GM12878 (cell line): ENCODE measurements at regions of chr10 and their contacts with region 1.

Region 1: GRCh38 chr10:14971867-14972448 is 12.8 kb downstream of the MEIG1 start:
- DNase-seq: no peak
- ATAC-seq: peak; percentile 85
- H3K4me3 ChIP-seq: no peak overlapping the region
- H3K27ac ChIP-seq: no peak overlapping the region
- H3K4me1 ChIP-seq: no peaks in the 10 kb centered on the region
- H3K27me3 ChIP-seq: no peaks in the 10 kb centered on the region
- CTCF ChIP-seq: peak; percentile 53 to 75 (median 54)
- EP300 ChIP-seq: no peak
- POLR2A ChIP-seq: no peak
- RAD21 ChIP-seq: peak; percentile 73

Region 2: DNA sequence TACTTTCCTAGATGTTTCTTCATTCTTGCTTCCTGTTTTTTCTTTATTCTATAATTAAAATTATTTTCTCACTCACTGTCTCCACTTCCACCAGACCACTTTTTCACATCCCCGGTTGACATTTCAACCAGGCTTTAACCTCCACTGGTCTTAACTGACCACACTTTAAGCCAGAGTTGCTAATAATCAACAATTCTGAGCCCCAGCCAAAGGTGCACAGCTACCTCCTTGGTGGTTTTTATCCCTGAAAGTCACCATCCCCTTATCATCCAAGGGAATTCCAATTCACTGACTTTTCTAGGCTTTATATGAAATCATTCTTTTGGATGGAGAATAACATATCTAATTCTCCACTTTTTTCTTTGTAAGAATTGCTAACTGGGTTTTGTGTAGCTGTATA is 780.1 kb before region 1 on chr10:
- CTCF ChIA-PET with region 1: interaction called, 3 read pairs
- POLR2A ChIA-PET with region 1: no interaction called
- RAD21 ChIA-PET with region 1: no interaction called
- SMC1A ChIA-PET with region 1: interaction called, 4 read pairs
- in situ Hi-C with region 1: no loop called
- intact Hi-C with region 1: loop called (anchors 5 kb)
- DNase-seq: no peak
- ATAC-seq: no peak
- H3K4me3 ChIP-seq: no peak overlapping the region
- H3K27ac ChIP-seq: no peak overlapping the region
- H3K4me1 ChIP-seq: no peaks in the 10 kb centered on the region
- H3K27me3 ChIP-seq: peaks cover 0 to 3% of the 10 kb centered on the region in 2 experiments; a peak in 2 of 4 replicates
- CTCF ChIP-seq: no peak
- EP300 ChIP-seq: no peak
- POLR2A ChIP-seq: no peak
- RAD21 ChIP-seq: no peak

Region 3: GRCh38 chr10:14500172-14500765 is 471.7 kb before region 1 on chr10:
- CTCF ChIA-PET with region 1: interaction called, 4 read pairs
- POLR2A ChIA-PET with region 1: no interaction called
- RAD21 ChIA-PET with region 1: no interaction called
- SMC1A ChIA-PET with region 1: no interaction called
- in situ Hi-C with region 1: no loop called
- intact Hi-C with region 1: loop called (anchors 1 kb)
- DNase-seq: no peak
- ATAC-seq: no peak
- H3K4me3 ChIP-seq: no peak overlapping the region
- H3K27ac ChIP-seq: no peak overlapping the region
- H3K4me1 ChIP-seq: no peaks in the 10 kb centered on the region
- H3K27me3 ChIP-seq: no peaks in the 10 kb centered on the region
- CTCF ChIP-seq: no peak
- EP300 ChIP-seq: no peak
- POLR2A ChIP-seq: no peak
- RAD21 ChIP-seq: no peak

Region 4: DNA sequence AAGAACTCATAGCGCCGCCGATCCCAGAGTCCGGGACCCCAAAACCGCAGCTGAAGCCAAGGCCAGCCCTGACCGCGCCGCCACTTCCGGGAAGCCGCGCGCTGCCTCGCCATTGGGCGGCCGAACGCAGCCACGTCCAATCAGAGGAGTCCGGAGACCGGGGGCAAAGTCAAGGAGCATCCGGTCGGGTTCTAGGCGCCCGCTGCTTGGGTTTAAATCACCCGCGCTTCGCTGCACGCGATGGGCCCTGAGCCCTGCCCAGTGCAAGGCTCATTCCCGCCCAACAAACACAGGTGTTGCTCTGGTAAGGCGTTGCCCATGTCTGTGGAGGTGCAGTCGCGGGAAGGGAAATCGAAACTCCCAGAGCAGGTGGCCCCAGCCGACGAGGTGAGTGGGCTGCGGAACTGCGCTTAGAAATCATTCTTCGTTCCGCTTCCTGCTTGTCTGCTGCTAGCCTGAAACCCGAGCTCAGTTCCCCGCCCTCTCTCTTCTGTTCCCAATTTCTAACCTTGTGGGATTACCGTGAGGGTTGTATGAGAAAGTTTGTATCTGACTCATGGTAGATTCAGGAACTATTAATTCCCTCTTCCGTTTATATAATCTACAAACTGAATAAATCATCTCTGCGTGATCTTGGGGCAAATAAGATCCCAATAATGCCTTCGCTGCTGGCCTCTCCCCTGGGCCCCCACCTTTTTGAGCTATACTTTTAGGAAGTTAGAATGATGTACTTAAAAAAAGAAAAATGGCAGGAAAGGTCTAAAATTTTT is 17.8 kb before region 1 on chr10 and contains the start of gene DCLRE1C:
- CTCF ChIA-PET with region 1: interaction called, 16 read pairs
- POLR2A ChIA-PET with region 1: interaction called, 3 read pairs
- RAD21 ChIA-PET with region 1: interaction called, 5 read pairs
- SMC1A ChIA-PET with region 1: interaction called, 9 read pairs
- in situ Hi-C with region 1: no loop called
- intact Hi-C with region 1: no loop called
- DNase-seq: peak; percentile 82
- ATAC-seq: peak; percentile 86
- H3K4me3 ChIP-seq: peak within 1 kb of the TSS; percentile 91
- H3K27ac ChIP-seq: peak within 1 kb of the TSS; percentile 98
- H3K4me1 ChIP-seq: peaks cover 21% of the 10 kb centered on the region
- H3K27me3 ChIP-seq: no peaks in the 10 kb centered on the region
- CTCF ChIP-seq: no peak
- EP300 ChIP-seq: peak in 1 of 2 experiments; percentile 56; a peak in 2 of 4 replicates
- POLR2A ChIP-seq: peak; percentile 80
- RAD21 ChIP-seq: no peak
- polyA plus RNA-seq, gene DCLRE1C: 15.7 to 26.2 TPM

Region 5: GRCh38 chr10:14959276-14960057 is 12.5 kb before region 1 on chr10 and contains the start of gene MEIG1:
- CTCF ChIA-PET with region 1: interaction called, 16 read pairs
- POLR2A ChIA-PET with region 1: no interaction called
- RAD21 ChIA-PET with region 1: interaction called, 5 read pairs
- SMC1A ChIA-PET with region 1: interaction called, 8 read pairs
- in situ Hi-C with region 1: no loop called
- intact Hi-C with region 1: no loop called
- DNase-seq: peak; percentile 60
- ATAC-seq: peak; percentile 93
- H3K4me3 ChIP-seq: peak within 1 kb of the TSS; percentile 72
- H3K27ac ChIP-seq: peak within 1 kb of the TSS; percentile 94
- H3K4me1 ChIP-seq: peaks cover 5% of the 10 kb centered on the region
- H3K27me3 ChIP-seq: no peaks in the 10 kb centered on the region
- CTCF ChIP-seq: no peak
- EP300 ChIP-seq: 0 out of 4 replicates have a peak, but pooled peaks of 1 of the 2 experiments have one; percentile 8
- POLR2A ChIP-seq: peak; percentile 22
- RAD21 ChIP-seq: no peak
- polyA plus RNA-seq, gene MEIG1: 0.79 to 0.80 TPM

Region 6: GRCh38 chr10:15112657-15113056 is 140.7 kb after region 1 on chr10:
- CTCF ChIA-PET with region 1: no interaction called
- POLR2A ChIA-PET with region 1: no interaction called
- RAD21 ChIA-PET with region 1: no interaction called
- SMC1A ChIA-PET with region 1: no interaction called
- in situ Hi-C with region 1: no loop called
- intact Hi-C with region 1: no loop called
- DNase-seq: no peak
- ATAC-seq: no peak
- H3K4me3 ChIP-seq: no peak overlapping the region
- H3K27ac ChIP-seq: no peak overlapping the region
- H3K4me1 ChIP-seq: no peaks in the 10 kb centered on the region
- H3K27me3 ChIP-seq: no peaks in the 10 kb centered on the region
- CTCF ChIP-seq: no peak
- EP300 ChIP-seq: no peak
- POLR2A ChIP-seq: no peak
- RAD21 ChIP-seq: no peak